ENCODE measurements at regions of chr10 and their contacts with region 1.

Region 1: DNA sequence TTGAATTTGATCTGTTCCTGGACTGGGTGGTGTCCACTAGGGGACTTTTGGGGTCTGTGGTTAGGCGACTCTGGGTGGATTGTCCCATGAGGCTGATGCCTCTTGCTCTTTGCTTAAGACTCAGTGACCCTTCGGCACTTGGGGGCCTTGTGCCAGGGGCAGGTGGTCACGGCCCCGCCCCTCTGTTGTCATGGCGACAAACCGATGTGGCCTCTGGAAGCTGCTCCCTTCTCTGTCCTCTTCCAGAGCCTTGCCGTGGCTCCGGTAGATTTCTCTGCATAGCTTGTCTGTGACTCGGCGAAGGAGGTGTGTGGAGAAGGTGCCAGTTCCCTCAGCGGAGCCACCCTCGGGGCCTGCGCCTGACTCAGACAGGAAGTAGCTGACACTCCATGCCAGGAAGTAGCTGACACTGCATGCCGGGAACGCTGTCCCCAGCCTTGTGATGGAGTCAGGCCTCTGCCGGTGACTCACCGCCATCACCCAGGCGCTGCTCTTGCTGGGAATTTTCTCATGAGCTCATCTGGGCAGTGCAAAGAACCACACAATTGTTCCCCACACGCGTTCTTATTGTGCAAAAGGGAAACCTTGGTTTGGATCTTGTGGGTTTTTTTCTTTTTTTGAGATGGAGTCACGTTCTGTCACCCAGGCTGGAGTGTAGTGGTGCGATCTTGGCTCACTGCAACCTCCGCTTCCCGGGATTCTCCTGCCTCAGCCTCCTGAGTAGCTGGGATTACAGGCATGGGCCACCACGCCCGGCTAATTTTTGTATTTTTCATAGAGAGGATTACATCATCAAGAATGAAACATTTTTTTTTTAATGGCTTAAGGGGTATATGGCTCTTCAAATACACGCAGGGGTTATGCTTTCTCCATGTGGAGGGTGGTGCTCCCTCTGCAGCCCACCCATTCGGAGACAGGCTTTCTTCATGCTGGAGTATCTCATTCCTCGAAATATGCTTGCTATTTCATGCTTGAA is 72.6 kb downstream of the PFKFB3 start:
- DNase-seq: peak; percentile 81 to 98 (median 86)
- H3K4me3 ChIP-seq: peak overlapping the region in 1 of 2 donors; percentile 26
- H3K4me3 Mint-ChIP-seq: peak overlapping the region; percentile 63 to 87 (median 78)
- H3K27ac ChIP-seq: peak overlapping the region; percentile 59
- H3K27ac Mint-ChIP-seq: peak overlapping the region; percentile 91 to 98 (median 94)
- H3K4me1 ChIP-seq: peaks cover 40% of the 10 kb centered on the region
- H3K4me1 Mint-ChIP-seq: peaks cover 26 to 52% (median 37%) of the 10 kb centered on the region in 4 donors
- H3K27me3 ChIP-seq: no peaks in the 10 kb centered on the region
- H3K27me3 Mint-ChIP-seq: no peaks in the 10 kb centered on the region

Region 2: DNA sequence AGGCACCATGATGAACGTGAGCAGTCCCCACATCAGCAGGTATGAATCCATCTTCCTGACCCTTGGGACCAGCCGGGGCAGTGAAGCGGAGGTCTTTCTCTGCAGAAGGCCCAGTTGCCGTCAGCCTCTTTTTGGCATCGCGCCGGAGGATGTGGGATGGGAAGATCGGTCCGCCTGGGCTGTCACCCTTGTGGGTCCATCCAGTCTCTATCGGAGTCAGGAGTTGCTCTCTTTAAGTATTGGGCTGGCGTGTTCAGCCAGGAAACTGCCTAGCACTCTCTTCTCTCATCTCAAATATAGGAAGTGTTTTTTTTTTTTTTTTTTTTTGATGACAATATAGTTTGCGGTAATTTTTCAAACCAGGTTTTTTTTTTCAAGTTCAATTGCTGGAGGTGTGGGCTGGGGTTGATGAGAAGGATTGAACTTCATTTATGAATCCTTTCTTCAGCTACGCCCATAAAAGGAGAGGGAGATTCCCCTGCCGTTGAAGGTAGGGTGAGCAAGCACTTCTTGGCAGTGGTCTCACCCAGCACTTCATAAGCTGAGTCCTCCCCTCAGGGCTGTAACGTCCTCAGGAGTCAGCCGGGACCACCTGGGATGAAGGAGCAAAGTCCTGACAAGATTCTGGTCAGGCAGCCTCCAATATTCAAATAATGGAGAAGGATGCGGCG is 213.1 kb before region 1 on chr10 and contains the start of gene IL2RA:
- CTCF ChIA-PET with region 1: no interaction called
- POLR2A ChIA-PET with region 1: no interaction called
- intact Hi-C with region 1: no loop called
- DNase-seq: peak; percentile 69 to 86 (median 75)
- H3K4me3 ChIP-seq: peak within 1 kb of the TSS; percentile 71 to 89
- H3K4me3 Mint-ChIP-seq: peak within 1 kb of the TSS; percentile 97 to 99 (median 98)
- H3K27ac ChIP-seq: peak within 1 kb of the TSS; percentile 83
- H3K27ac Mint-ChIP-seq: peak within 1 kb of the TSS; percentile 95 to 98 (median 96)
- H3K4me1 ChIP-seq: peaks cover 80% of the 10 kb centered on the region
- H3K4me1 Mint-ChIP-seq: peaks cover 44 to 88% (median 65%) of the 10 kb centered on the region in 4 donors
- H3K27me3 ChIP-seq: no peaks in the 10 kb centered on the region
- H3K27me3 Mint-ChIP-seq: no peaks in the 10 kb centered on the region
- total RNA-seq, gene IL2RA: 15.1 to 17.1 TPM

Region 3: GRCh38 chr10:6300106-6300783 is 24.9 kb after region 1 on chr10:
- CTCF ChIA-PET with region 1: no interaction called
- POLR2A ChIA-PET with region 1: interaction called, 11 read pairs
- intact Hi-C with region 1: no loop called
- DNase-seq: peak; percentile 56 to 76 (median 71)
- H3K4me3 ChIP-seq: peak overlapping the region in 1 of 2 donors; percentile 28
- H3K4me3 Mint-ChIP-seq: peak overlapping the region; percentile 26 to 82 (median 57)
- H3K27ac ChIP-seq: peak overlapping the region; percentile 27
- H3K27ac Mint-ChIP-seq: peak overlapping the region; percentile 72 to 95 (median 91)
- H3K4me1 ChIP-seq: peaks cover 26% of the 10 kb centered on the region
- H3K4me1 Mint-ChIP-seq: peaks cover 16 to 42% (median 28%) of the 10 kb centered on the region in 4 donors
- H3K27me3 ChIP-seq: no peaks in the 10 kb centered on the region
- H3K27me3 Mint-ChIP-seq: no peaks in the 10 kb centered on the region

Region 4: GRCh38 chr10:6356280-6356793 is 81.0 kb after region 1 on chr10:
- CTCF ChIA-PET with region 1: no interaction called
- POLR2A ChIA-PET with region 1: no interaction called
- intact Hi-C with region 1: no loop called
- DNase-seq: no peak
- H3K4me3 ChIP-seq: no peak overlapping the region
- H3K4me3 Mint-ChIP-seq: no peak overlapping the region
- H3K27ac ChIP-seq: no peak overlapping the region
- H3K27ac Mint-ChIP-seq: peak overlapping the region in 1 of 7 donors; percentile 58
- H3K4me1 ChIP-seq: no peaks in the 10 kb centered on the region
- H3K4me1 Mint-ChIP-seq: peaks cover 0 to 1% (median 0%) of the 10 kb centered on the region in 4 donors
- H3K27me3 ChIP-seq: no peaks in the 10 kb centered on the region
- H3K27me3 Mint-ChIP-seq: peaks cover 0 to 2% of the 10 kb centered on the region in 2 donors

Measured in CD4-positive, alpha-beta memory T cell (primary cell).